T-cell (primary cell): ENCODE measurements at regions of chr10 and their contacts with region 1.

Region 1: GRCh38 chr10:86943076-86944035 is 14.1 kb downstream of the MMRN2 start:
- DNase-seq: no peak
- ATAC-seq: no peak
- H3K4me3 ChIP-seq: no peak overlapping the region
- H3K4me3 Mint-ChIP-seq: no peak overlapping the region
- H3K27ac ChIP-seq: no peak overlapping the region
- H3K27ac Mint-ChIP-seq: no peak overlapping the region
- H3K4me1 ChIP-seq: peaks cover 0 to 15% of the 10 kb centered on the region in 2 experiments
- H3K4me1 Mint-ChIP-seq: peaks cover 0 to 17% (median 7%) of the 10 kb centered on the region in 3 donors
- H3K27me3 ChIP-seq: peaks cover 0 to 18% of the 10 kb centered on the region in 2 experiments
- H3K27me3 Mint-ChIP-seq: no peaks in the 10 kb centered on the region

Region 2: GRCh38 chr10:86953747-86954680 is 10.7 kb after region 1 on chr10:
- CTCF ChIA-PET with region 1: interaction called, 8 to 10 read pairs
- POLR2A ChIA-PET with region 1: no interaction called
- DNase-seq: no peak
- ATAC-seq: no peak
- H3K4me3 ChIP-seq: no peak overlapping the region
- H3K4me3 Mint-ChIP-seq: no peak overlapping the region
- H3K27ac ChIP-seq: no peak overlapping the region
- H3K27ac Mint-ChIP-seq: no peak overlapping the region
- H3K4me1 ChIP-seq: peaks cover 14 to 37% of the 10 kb centered on the region in 2 experiments
- H3K4me1 Mint-ChIP-seq: peaks cover 9 to 25% (median 19%) of the 10 kb centered on the region in 3 donors
- H3K27me3 ChIP-seq: peaks cover 0 to 3% of the 10 kb centered on the region in 2 experiments
- H3K27me3 Mint-ChIP-seq: no peaks in the 10 kb centered on the region